ENCODE measurements at regions of chr7 and their contacts with region 1.

Region 1: GRCh38 chr7:128862571-128863432 is at the start of gene ATP6V1F:
- DNase-seq: peak; percentile 97 to 100
- H3K4me3 ChIP-seq: peak within 1 kb of the TSS; percentile 74 to 92 (median 78)
- H3K27ac ChIP-seq: no peak within 1 kb of the TSS
- H3K4me1 ChIP-seq: peaks cover 0 to 12% (median 5%) of the 10 kb centered on the region in 4 experiments; a peak in 5 of 7 replicates
- H3K27me3 ChIP-seq: peaks cover 0 to 2% (median under 1%) of the 10 kb centered on the region in 4 experiments; a peak in 3 of 7 replicates
- CTCF ChIP-seq: no peak
- EP300 ChIP-seq: no peak
- POLR2A ChIP-seq: peak in 1 of 2 experiments; percentile 49; a peak in 2 of 3 replicates
- RAD21 ChIP-seq: no peak
- total RNA-seq, gene ATP6V1F: 104 TPM in 2 replicates

Region 2: GRCh38 chr7:128835790-128836641 is 26.8 kb before region 1 on chr7:
- CTCF ChIA-PET with region 1: interaction called, 148 read pairs
- POLR2A ChIA-PET with region 1: interaction called, 27 read pairs
- DNase-seq: no peak
- H3K4me3 ChIP-seq: no peak overlapping the region
- H3K27ac ChIP-seq: no peak overlapping the region
- H3K4me1 ChIP-seq: peaks cover 0 to 32% (median 23%) of the 10 kb centered on the region in 4 experiments; a peak in 6 of 7 replicates
- H3K27me3 ChIP-seq: peaks cover 0 to 9% (median 8%) of the 10 kb centered on the region in 4 experiments; a peak in 5 of 7 replicates
- CTCF ChIP-seq: no peak
- EP300 ChIP-seq: no peak
- POLR2A ChIP-seq: no peak
- RAD21 ChIP-seq: no peak

Region 3: GRCh38 chr7:128841921-128842651 is 20.7 kb before region 1 on chr7:
- CTCF ChIA-PET with region 1: interaction called, 148 read pairs
- POLR2A ChIA-PET with region 1: interaction called, 3 read pairs
- DNase-seq: peak in 1 of 2 experiments; percentile 88
- H3K4me3 ChIP-seq: no peak overlapping the region
- H3K27ac ChIP-seq: no peak overlapping the region
- H3K4me1 ChIP-seq: peaks cover 0 to 10% (median 5%) of the 10 kb centered on the region in 4 experiments; a peak in 6 of 7 replicates
- H3K27me3 ChIP-seq: no peaks in the 10 kb centered on the region; a peak in 1 of 7 replicates
- CTCF ChIP-seq: peak in 2 of 3 experiments; percentile 71 to 74; a peak in 3 of 4 replicates
- EP300 ChIP-seq: no peak; a peak in 1 of 3 replicates
- POLR2A ChIP-seq: no peak
- RAD21 ChIP-seq: peak; percentile 33 to 53; a peak in 3 of 4 replicates